Ovary (tissue), 10 donors: ENCODE measurements at regions of chr10 and their contacts with region 1.

Region 1: DNA sequence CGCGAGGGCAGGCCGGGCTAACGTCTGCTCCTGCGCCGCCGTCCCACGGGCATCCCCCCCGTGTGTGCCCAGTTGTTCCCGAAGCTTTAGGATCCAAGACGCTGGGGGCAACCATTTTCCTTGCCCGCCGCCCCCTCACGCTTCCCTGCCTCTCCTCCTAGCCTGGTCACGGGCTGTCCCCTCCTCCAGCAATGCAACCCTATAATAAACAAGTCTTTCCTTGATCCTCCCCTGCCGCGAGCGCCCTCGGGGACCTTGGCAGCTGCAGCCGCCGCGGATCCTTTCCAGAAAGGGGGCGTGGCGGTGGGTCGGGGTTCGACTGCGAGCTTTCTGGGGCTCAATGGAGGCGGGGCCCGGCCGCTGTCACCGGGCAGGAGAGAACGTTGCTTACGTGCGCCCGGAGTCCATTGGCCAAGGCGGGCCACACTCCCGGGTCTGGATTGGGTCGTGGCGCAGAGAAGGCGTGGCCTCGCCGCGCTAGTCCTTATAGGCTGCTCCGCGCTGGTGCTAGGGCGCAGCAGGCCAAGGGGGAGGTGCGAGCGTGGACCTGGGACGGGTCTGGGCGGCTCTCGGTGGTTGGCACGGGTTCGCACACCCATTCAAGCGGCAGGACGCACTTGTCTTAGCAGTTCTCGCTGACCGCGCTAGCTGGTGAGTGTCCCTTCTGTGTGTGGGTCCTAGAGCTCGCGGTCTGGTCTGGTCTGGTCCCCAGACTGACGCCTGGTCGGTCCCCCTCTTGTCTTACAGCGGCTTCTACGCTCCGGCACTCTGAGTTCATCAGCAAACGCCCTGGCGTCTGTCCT is at the start of gene DDIT4:
- DNase-seq: peak; percentile 100
- H3K4me3 ChIP-seq: peak within 1 kb of the TSS; percentile 77
- H3K27ac ChIP-seq: peak within 1 kb of the TSS; percentile 89 to 95
- H3K4me1 ChIP-seq: peaks cover 6% of the 10 kb centered on the region
- H3K27me3 ChIP-seq: no peaks in the 10 kb centered on the region
- CTCF ChIP-seq: peak in 1 of 3 donors; percentile 29
- EP300 ChIP-seq: peak; percentile 79
- POLR2A ChIP-seq: peak; percentile 100
- total RNA-seq, gene DDIT4: 229 to 1,952 (median 524) TPM

Region 2: GRCh38 chr10:72248468-72249151 is 25.0 kb before region 1 on chr10:
- intact Hi-C with region 1: loop called in 1 of 4 experiments (anchors 2 kb)
- DNase-seq: peak; percentile 76 to 88 (median 85)
- H3K4me3 ChIP-seq: peak overlapping the region; percentile 26
- H3K27ac ChIP-seq: peak overlapping the region; percentile 86 to 88
- H3K4me1 ChIP-seq: peaks cover 45% of the 10 kb centered on the region
- H3K27me3 ChIP-seq: no peaks in the 10 kb centered on the region
- CTCF ChIP-seq: peak in 1 of 3 donors; percentile 5
- EP300 ChIP-seq: peak; percentile 67
- POLR2A ChIP-seq: peak; percentile 54

Region 3: DNA sequence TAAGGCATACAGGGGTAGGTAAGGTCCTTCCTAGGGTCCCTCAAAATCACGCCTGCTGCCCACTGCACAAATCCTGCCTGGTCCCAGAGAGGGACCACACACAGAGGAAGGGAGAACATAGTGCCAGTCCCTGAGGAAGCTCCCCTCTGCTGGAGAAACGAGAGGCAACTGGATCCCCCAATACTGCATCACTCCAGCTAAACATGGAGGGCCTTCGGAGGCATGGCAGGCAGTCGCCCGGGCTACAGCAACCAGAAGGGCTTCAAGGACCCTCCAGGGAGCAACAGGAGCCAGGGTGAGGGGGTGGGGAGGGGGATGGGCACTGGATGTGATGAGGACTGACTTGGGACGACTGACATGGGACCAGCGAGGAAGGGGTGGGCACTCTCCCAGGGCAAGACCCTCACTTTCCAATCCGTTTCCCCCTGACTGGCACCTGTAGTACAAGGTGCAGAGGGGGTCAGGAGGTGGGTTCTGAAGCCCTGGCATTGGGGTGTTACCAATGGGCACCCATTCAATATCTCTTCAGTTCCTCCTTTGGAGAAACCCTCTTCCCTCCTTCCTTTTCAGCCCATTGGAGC is 21.8 kb after region 1 on chr10:
- intact Hi-C with region 1: loop called in 1 of 4 experiments (anchors 2 kb)
- DNase-seq: peak in 1 of 5 donors; percentile 27
- H3K4me3 ChIP-seq: no peak overlapping the region
- H3K27ac ChIP-seq: no peak overlapping the region
- H3K4me1 ChIP-seq: peaks cover 4% of the 10 kb centered on the region
- H3K27me3 ChIP-seq: no peaks in the 10 kb centered on the region
- CTCF ChIP-seq: no peak
- EP300 ChIP-seq: no peak
- POLR2A ChIP-seq: no peak

Region 4: GRCh38 chr10:72319416-72320254 is 46.0 kb after region 1 on chr10:
- intact Hi-C with region 1: loop called in 2 of 4 experiments (anchors 2 to 10 kb)
- DNase-seq: peak; percentile 95 to 97 (median 96)
- H3K4me3 ChIP-seq: peak overlapping the region; percentile 40
- H3K27ac ChIP-seq: peak overlapping the region; percentile 71 to 88
- H3K4me1 ChIP-seq: peaks cover 38% of the 10 kb centered on the region
- H3K27me3 ChIP-seq: no peaks in the 10 kb centered on the region
- CTCF ChIP-seq: peak in 1 of 3 donors; percentile 33
- EP300 ChIP-seq: peak; percentile 68
- POLR2A ChIP-seq: peak; percentile 28

Region 5: DNA sequence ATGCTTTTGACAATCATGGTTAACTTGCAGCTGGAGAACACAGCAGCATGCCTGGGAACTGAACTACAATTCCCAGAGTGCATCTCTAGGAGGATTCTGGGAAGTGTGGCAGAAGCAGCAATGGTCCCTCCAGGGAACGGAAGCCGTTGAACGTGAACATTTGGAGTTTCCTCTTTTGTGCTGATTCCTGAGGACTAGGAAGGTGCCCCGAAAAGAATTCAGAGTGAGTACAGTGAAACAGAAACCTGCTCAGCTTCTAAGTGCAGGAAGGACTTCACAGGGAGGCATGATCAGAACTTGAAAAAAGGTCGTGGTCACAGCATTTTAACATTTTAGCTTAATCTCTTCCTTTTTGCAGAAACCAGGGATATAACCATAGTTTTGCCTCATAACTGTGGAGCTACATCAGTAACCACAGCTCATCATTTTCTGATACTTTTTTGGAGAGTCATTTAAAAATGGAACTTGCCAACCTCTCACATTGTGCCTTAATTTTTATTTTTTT is 836.8 kb after region 1 on chr10 and contains the start of gene NUDT13:
- intact Hi-C with region 1: no loop called
- DNase-seq: peak; percentile 61 to 73 (median 67)
- H3K4me3 ChIP-seq: peak within 1 kb of the TSS; percentile 48
- H3K27ac ChIP-seq: peak within 1 kb of the TSS in 1 of 2 donors; percentile 16
- H3K4me1 ChIP-seq: peaks cover 2% of the 10 kb centered on the region
- H3K27me3 ChIP-seq: no peaks in the 10 kb centered on the region
- CTCF ChIP-seq: no peak
- EP300 ChIP-seq: no peak
- POLR2A ChIP-seq: no peak
- total RNA-seq, gene NUDT13: 0.86 to 1.9 (median 1.5) TPM